Natural killer cell (primary cell): ENCODE measurements at regions of chr5 and their contacts with region 1.

Region 1: DNA sequence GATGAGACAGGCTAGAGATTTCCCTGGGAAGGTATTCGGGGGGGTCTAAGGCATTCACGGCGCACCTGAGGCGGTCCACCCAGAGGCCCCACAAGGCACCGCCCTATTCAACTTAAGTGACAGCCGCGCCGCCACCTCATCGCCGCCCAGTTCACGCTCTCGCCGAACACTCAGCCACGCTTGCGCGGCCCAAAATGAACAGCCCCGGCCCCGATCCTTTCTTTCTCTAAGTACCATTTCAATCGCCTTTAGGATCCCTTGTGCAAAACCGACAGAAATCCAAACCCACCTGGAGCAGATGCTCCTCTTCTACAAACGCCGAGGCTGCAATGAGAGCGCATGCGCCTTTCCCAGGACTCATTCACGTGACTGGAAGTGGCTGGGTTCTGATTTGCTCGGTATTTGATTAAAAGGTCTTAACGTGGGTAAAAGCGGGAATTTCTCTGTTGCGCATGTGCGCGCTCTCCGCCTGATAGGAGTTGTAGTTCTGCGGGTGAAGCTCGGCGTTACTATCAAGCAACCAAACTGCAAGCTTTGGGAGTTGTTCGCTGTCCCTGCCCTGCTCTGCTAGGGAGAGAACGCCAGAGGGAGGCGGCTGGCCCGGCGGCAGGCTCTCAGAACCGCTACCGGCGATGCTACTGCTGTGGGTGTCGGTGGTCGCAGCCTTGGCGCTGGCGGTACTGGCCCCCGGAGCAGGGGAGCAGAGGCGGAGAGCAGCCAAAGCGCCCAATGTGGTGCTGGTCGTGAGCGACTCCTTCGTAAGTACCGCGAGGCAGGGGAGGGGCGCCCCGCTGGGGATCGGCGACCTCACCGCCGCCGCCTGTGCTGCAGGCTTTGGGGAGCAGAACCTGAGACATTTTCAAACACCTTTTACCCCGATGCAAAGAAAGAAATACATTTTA is at the starts of genes ARSK and SKIC3:
- DNase-seq: peak; percentile 81 to 99
- ATAC-seq: peak; percentile 85 to 96 (median 88)
- H3K4me3 ChIP-seq: peak within 1 kb of the TSS; percentile 97
- H3K4me3 Mint-ChIP-seq: peak within 1 kb of the TSS; percentile 98
- H3K27ac ChIP-seq: peak within 1 kb of the TSS; percentile 78
- H3K27ac Mint-ChIP-seq: peak within 1 kb of the TSS; percentile 92 to 94
- H3K4me1 ChIP-seq: peaks cover 13% of the 10 kb centered on the region
- H3K4me1 Mint-ChIP-seq: peaks cover 35 to 44% of the 10 kb centered on the region in 2 donors
- H3K27me3 ChIP-seq: no peaks in the 10 kb centered on the region
- H3K27me3 Mint-ChIP-seq: no peaks in the 10 kb centered on the region
- CTCF ChIP-seq: no peak
- total RNA-seq, gene ARSK: 2.8 to 5.8 (median 3.5) TPM
- total RNA-seq, gene SKIC3: 67.5 to 94.1 (median 71.1) TPM

Region 2: GRCh38 chr5:95406426-95407090 is 148.3 kb before region 1 on chr5:
- intact Hi-C with region 1: no loop called
- DNase-seq: no peak
- ATAC-seq: no peak
- H3K4me3 ChIP-seq: no peak overlapping the region
- H3K4me3 Mint-ChIP-seq: no peak overlapping the region
- H3K27ac ChIP-seq: no peak overlapping the region
- H3K27ac Mint-ChIP-seq: no peak overlapping the region
- H3K4me1 ChIP-seq: no peaks in the 10 kb centered on the region
- H3K4me1 Mint-ChIP-seq: no peaks in the 10 kb centered on the region
- H3K27me3 ChIP-seq: no peaks in the 10 kb centered on the region
- H3K27me3 Mint-ChIP-seq: peaks cover 12 to 16% of the 10 kb centered on the region in 2 donors
- CTCF ChIP-seq: no peak

Region 3: DNA sequence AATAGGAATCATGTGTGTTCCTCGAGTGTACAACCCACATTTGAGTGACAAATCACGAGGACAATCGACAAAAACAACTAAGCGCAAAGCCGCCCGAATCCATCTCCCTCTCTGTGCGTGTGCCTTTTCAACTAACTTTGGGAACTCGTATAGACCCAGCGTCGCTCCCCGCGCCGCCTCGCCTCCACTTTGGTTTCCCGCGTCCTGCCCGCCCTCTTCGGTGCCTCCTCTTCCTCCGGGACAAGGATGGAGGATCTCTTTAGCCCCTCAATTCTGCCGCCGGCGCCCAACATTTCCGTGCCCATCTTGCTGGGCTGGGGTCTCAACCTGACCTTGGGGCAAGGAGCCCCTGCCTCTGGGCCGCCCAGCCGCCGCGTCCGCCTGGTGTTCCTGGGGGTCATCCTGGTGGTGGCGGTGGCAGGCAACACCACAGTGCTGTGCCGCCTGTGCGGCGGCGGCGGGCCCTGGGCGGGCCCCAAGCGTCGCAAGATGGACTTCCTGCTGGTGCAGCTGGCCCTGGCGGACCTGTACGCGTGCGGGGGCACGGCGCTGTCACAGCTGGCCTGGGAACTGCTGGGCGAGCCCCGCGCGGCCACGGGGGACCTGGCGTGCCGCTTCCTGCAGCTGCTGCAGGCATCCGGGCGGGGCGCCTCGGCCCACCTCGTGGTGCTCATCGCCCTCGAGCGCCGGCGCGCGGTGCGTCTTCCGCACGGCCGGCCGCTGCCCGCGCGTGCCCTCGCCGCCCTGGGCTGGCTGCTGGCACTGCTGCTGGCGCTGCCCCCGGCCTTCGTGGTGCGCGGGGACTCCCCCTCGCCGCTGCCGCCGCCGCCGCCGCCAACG is 65.4 kb after region 1 on chr5 and contains the start of gene GPR150:
- intact Hi-C with region 1: loop called (anchors 10 kb)
- DNase-seq: peak; percentile 57 to 80
- ATAC-seq: peak; percentile 79 to 83 (median 81)
- H3K4me3 ChIP-seq: peak within 1 kb of the TSS; percentile 66
- H3K4me3 Mint-ChIP-seq: peak within 1 kb of the TSS; percentile 94
- H3K27ac ChIP-seq: no peak within 1 kb of the TSS
- H3K27ac Mint-ChIP-seq: peak within 1 kb of the TSS; percentile 71 to 78
- H3K4me1 ChIP-seq: peaks cover 20% of the 10 kb centered on the region
- H3K4me1 Mint-ChIP-seq: peaks cover 32 to 36% of the 10 kb centered on the region in 2 donors
- H3K27me3 ChIP-seq: no peaks in the 10 kb centered on the region
- H3K27me3 Mint-ChIP-seq: no peaks in the 10 kb centered on the region
- CTCF ChIP-seq: no peak
- total RNA-seq, gene GPR150: 0.63 to 0.97 (median 0.89) TPM

Region 4: DNA sequence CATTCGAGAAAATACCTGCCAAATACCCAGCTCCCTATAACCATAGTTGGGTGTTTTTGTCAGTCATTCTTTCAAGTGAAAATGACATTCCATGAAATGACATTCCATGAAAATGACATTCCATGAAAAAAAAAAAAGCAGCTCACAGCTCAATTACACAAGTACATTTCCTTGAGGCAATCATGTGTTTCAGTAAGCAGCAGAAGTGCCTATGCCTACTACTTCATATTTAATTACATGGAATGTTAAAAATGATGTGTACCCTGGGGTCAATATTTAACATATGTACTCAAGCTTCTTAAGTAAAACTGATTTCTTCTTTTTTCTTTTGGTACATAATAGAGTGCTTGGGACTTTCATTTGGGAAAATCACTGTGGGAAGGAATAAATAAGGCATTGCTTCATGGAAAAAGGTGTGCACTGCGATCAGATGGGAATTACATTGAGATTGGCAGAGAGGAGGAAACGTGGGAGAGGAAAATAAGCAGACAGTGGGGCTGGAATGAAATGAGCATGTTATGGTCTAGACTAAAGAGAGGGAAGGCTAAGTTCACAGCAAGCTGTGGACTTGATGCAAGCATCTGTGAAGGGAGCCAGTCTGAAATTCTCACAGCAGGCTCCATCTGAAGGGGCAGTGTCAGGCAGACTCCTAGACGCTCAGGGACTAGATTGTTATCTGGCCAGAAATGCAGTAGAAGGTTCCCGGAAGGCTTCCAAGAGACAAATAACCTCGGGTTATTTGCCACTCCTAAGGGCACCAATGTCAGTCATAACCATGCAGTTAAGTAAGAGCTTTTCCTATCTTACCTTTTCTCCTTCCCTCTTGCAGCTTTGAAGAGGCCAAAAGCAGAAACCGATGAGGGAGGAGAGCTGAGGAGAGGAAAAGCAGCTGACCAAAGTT is 143.1 kb after region 1 on chr5:
- intact Hi-C with region 1: no loop called
- DNase-seq: no peak
- ATAC-seq: no peak
- H3K4me3 ChIP-seq: no peak overlapping the region
- H3K4me3 Mint-ChIP-seq: no peak overlapping the region
- H3K27ac ChIP-seq: no peak overlapping the region
- H3K27ac Mint-ChIP-seq: no peak overlapping the region
- H3K4me1 ChIP-seq: no peaks in the 10 kb centered on the region
- H3K4me1 Mint-ChIP-seq: no peaks in the 10 kb centered on the region
- H3K27me3 ChIP-seq: no peaks in the 10 kb centered on the region
- H3K27me3 Mint-ChIP-seq: no peaks in the 10 kb centered on the region
- CTCF ChIP-seq: no peak

Region 5: DNA sequence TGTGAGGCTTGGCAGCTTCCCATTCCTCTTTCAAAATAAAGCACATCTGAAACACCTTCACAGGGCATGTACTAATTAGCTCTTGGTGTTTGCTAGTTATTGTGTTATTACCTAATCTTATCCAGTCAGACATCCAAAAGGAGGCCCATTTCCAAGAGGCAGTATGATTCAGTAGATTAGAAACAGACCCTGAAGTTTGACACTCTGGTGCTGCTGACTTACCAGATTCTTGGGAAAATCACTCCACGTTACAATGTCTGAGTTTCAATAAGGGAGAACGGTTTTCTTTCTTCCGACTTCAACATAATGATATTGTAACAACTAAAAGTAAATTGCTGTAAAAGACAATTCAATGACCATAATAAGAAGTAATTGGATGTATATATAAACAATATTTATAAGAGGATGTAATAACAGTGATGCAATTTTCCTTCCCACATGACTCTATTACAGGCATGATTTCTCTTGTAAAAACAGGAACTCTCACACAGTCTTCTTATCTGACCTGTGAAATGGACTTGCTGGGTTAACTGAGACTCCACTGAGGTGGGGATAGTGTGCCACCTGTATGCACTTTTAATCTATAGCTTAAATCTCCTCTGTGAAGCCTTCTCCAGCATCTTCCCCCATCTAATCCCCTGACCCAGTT is 588.0 kb after region 1 on chr5:
- intact Hi-C with region 1: no loop called
- DNase-seq: no peak
- ATAC-seq: no peak
- H3K4me3 ChIP-seq: no peak overlapping the region
- H3K4me3 Mint-ChIP-seq: no peak overlapping the region
- H3K27ac ChIP-seq: no peak overlapping the region
- H3K27ac Mint-ChIP-seq: no peak overlapping the region
- H3K4me1 ChIP-seq: no peaks in the 10 kb centered on the region
- H3K4me1 Mint-ChIP-seq: no peaks in the 10 kb centered on the region
- H3K27me3 ChIP-seq: no peaks in the 10 kb centered on the region
- H3K27me3 Mint-ChIP-seq: peaks cover 6 to 19% of the 10 kb centered on the region in 2 donors
- CTCF ChIP-seq: no peak